RWPE1 (cell line): ENCODE measurements at regions of chr3 and their contacts with region 1.

Region 1: DNA sequence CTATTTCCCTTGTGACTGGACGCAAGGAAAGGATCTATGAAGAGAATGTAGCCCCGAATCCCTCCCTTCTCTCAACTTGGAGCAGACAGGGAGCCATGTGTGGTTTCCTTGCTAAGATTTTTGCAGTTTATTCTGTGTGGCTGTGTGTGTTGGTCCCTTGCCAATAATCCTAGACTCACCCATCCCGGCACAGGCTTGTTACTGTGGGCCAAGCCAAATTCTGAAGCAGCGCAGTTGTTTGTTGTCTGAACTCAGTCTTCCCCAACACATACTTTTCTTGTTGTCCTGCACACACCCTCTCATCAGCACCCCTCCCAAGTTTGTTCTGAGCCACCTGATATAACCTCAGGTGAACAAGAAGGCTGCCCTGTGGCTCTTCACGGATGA is 193.3 kb upstream of the CTDSPL start:
- DNase-seq: no peak
- H3K27ac ChIP-seq: peak overlapping the region; percentile 64
- CTCF ChIP-seq: no peak

Region 2: GRCh38 chr3:37622999-37623883 is 45.2 kb before region 1 on chr3:
- CTCF ChIA-PET with region 1: no interaction called
- POLR2A ChIA-PET with region 1: no interaction called
- DNase-seq: no peak
- H3K27ac ChIP-seq: no peak overlapping the region
- CTCF ChIP-seq: no peak

Region 3: DNA sequence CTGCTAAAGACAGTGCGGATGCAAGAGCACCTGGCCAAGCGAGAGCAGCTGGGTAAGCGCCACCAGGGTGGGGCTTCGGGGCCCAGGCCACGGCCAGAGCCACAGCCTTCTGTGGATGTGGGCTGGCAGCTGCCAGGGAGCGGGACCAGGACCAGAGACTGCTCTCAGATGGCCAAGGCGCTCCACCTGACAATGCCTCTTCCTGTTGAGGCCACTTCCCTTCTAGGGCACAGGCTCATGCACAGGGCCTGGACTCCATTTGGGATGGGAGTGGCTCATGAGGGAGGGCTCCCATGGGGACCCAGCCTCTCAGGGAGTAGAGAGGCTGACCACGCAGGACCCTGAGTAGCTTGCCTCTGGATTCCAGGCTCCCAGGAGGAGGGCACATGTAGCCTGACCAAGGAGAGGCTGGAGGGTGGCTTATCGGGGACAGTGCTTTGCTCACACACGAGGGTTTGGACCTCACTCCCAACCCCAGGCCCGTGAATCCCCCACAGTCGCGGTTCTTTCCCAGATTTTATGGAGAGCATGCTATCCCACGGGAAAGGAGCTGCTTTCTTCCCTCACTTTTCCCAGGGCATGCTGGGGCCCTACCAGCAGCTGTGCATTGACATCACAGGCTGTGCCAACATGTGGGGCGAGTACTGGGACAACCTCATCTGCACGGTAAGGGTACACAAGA is 443.4 kb after region 1 on chr3:
- CTCF ChIA-PET with region 1: no interaction called
- POLR2A ChIA-PET with region 1: interaction called, 15 read pairs
- DNase-seq: no peak
- H3K27ac ChIP-seq: no peak overlapping the region
- CTCF ChIP-seq: no peak

Region 4: DNA sequence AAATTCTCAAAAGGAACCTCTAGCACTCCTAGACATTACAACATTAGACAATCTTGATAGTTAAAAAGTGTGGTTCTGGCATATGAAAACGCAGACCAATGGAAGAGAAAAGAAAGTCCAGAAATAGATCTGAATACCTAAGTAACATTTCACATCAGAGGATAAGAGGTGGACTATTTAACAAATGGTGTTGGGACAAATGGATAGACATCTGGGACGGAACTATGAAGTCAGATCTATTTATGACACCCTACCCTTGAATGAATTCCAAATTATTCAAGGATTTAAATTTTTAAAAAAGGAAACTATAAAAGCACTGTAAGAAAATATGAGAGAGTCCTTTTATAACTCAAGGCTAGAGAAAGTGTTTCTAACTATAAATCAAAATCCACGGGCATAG is 1272.0 kb after region 1 on chr3:
- CTCF ChIA-PET with region 1: no interaction called
- POLR2A ChIA-PET with region 1: no interaction called
- DNase-seq: no peak
- H3K27ac ChIP-seq: no peak overlapping the region
- CTCF ChIP-seq: no peak